ENCODE measurements at regions of chrX and their contacts with region 1.

Region 1: DNA sequence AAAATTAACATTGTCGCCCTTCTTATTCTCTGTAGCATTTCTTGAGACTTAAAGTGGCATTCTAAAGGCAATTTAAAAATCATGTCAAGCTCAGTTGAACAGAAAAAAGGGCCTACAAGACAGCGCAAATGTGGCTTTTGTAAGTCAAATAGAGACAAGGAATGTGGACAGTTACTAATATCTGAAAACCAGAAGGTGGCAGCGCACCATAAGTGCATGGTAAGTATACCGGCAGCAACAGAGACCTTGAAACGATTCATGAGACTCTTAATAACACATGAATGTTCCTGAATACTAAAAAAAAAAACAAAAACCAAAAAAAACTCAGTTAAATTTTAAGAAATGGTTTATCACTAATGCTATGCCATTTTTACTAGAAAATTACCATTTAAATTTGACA is 82.4 kb upstream of the HPRT1 start:
- DNase-seq: peak; percentile 48
- ATAC-seq: no peak
- H3K4me3 ChIP-seq: no peak overlapping the region
- H3K27ac ChIP-seq: no peak overlapping the region
- H3K4me1 ChIP-seq: peaks cover 18% of the 10 kb centered on the region; the same call in 1 of the 2 replicates
- H3K27me3 ChIP-seq: no peaks in the 10 kb centered on the region
- CTCF ChIP-seq: peak; percentile 58
- EP300 ChIP-seq: no peak
- POLR2A ChIP-seq: no peak
- RAD21 ChIP-seq: no peak

Region 2: DNA sequence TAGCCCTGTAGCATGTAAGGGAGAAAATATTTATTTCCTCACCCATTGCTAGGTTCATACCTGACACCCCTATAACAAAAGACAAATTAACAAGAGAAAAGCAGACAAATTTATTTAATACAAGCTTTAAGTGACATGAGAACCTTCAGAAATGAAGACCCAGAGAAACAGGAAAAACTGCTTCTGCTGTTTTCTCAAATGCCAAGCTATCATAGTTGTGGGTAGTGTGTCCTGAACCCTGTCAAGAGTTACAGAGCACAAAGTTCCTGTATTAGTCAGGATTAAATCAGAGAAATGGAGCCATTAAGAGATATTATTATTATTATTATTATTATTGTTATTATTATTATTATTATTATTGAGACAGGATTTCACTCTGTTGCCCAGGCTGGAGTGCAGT is 123.0 kb before region 1 on chrX:
- CTCF ChIA-PET with region 1: no interaction called
- POLR2A ChIA-PET with region 1: no interaction called
- in situ Hi-C with region 1: no loop called
- intact Hi-C with region 1: no loop called
- DNase-seq: no peak
- ATAC-seq: no peak
- H3K4me3 ChIP-seq: no peak overlapping the region
- H3K27ac ChIP-seq: no peak overlapping the region
- H3K4me1 ChIP-seq: no peaks in the 10 kb centered on the region
- H3K27me3 ChIP-seq: no peaks in the 10 kb centered on the region
- CTCF ChIP-seq: no peak
- EP300 ChIP-seq: no peak
- POLR2A ChIP-seq: no peak
- RAD21 ChIP-seq: no peak

Region 3: DNA sequence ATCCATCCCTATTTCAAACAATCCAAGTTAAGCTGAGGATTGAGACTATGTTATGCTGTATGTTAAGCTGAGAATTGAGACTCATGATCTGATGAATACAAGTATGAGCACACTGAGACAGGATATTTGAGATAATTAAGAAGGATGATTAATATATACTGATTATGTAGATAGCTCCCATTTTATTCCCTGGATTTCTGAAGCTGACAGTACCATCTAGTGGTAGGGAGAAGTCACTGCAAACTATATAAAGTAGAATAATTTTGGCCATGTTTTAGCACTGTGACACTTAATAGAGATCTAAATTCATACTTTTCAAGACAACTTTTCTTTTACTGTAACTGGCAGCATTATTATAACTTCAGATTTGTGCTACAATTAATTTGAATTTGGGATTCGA is 18.6 kb after region 1 on chrX:
- CTCF ChIA-PET with region 1: no interaction called
- POLR2A ChIA-PET with region 1: no interaction called
- in situ Hi-C with region 1: no loop called
- intact Hi-C with region 1: loop called (anchors 1 kb)
- DNase-seq: no peak
- ATAC-seq: no peak
- H3K4me3 ChIP-seq: no peak overlapping the region
- H3K27ac ChIP-seq: no peak overlapping the region
- H3K4me1 ChIP-seq: no peaks in the 10 kb centered on the region
- H3K27me3 ChIP-seq: no peaks in the 10 kb centered on the region
- CTCF ChIP-seq: peak; percentile 46
- EP300 ChIP-seq: no peak
- POLR2A ChIP-seq: no peak
- RAD21 ChIP-seq: no peak

Region 4: GRCh38 chrX:134469486-134469885 is 91.9 kb after region 1 on chrX:
- CTCF ChIA-PET with region 1: no interaction called
- POLR2A ChIA-PET with region 1: no interaction called
- in situ Hi-C with region 1: no loop called
- intact Hi-C with region 1: no loop called
- DNase-seq: no peak
- ATAC-seq: no peak
- H3K4me3 ChIP-seq: no peak overlapping the region
- H3K27ac ChIP-seq: no peak overlapping the region
- H3K4me1 ChIP-seq: no peaks in the 10 kb centered on the region
- H3K27me3 ChIP-seq: no peaks in the 10 kb centered on the region
- CTCF ChIP-seq: no peak
- EP300 ChIP-seq: no peak
- POLR2A ChIP-seq: no peak
- RAD21 ChIP-seq: no peak

Measured in HepG2 (cell line).